Activated T-helper 2 cell treated with anti-CD3 and anti-CD28 coated beads, Interferon-gamma antibody, Interleukin-2, Interleukin-4, amounts not matched to agents 10 μg/mL and 5 μg/mL and 100 μg/mL, durations not matched to agents 14 hours and 24 hours and 36 hours (primary cell): ENCODE measurements at regions of chr1 and their contacts with region 1.

Region 1: GRCh38 chr1:198681831-198682759 is 43.3 kb downstream of the PTPRC start:
- DNase-seq: peak; percentile 84
- H3K4me3 Mint-ChIP-seq: peak overlapping the region; percentile 78
- H3K27ac Mint-ChIP-seq: peak overlapping the region; percentile 96
- H3K4me1 Mint-ChIP-seq: peaks cover 77% of the 10 kb centered on the region
- H3K27me3 Mint-ChIP-seq: no peaks in the 10 kb centered on the region

Region 2: DNA sequence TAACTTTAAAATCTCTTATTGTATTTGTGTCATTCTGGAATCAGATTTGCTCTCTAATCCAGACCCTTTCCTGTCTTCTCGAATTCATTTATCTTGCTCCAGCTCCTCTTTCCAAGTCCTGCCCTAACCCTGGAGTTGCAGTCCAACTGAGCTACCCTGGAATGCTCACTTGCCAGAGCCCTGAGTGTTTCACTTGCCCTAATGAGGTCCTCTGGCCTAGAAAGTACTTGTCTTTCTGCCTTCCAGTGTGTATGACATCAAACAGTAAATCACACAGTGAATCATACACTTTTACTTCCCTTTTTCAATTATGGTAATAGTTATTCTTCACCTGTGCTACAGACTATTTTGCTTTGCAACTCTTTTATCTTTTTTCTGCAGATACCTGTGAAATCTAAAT is 428.4 kb before region 1 on chr1:
- intact Hi-C with region 1: loop called (anchors 5 kb)
- DNase-seq: no peak
- H3K4me3 Mint-ChIP-seq: peak overlapping the region; percentile 55
- H3K27ac Mint-ChIP-seq: peak overlapping the region; percentile 90
- H3K4me1 Mint-ChIP-seq: peaks cover 41% of the 10 kb centered on the region
- H3K27me3 Mint-ChIP-seq: no peaks in the 10 kb centered on the region

Region 3: DNA sequence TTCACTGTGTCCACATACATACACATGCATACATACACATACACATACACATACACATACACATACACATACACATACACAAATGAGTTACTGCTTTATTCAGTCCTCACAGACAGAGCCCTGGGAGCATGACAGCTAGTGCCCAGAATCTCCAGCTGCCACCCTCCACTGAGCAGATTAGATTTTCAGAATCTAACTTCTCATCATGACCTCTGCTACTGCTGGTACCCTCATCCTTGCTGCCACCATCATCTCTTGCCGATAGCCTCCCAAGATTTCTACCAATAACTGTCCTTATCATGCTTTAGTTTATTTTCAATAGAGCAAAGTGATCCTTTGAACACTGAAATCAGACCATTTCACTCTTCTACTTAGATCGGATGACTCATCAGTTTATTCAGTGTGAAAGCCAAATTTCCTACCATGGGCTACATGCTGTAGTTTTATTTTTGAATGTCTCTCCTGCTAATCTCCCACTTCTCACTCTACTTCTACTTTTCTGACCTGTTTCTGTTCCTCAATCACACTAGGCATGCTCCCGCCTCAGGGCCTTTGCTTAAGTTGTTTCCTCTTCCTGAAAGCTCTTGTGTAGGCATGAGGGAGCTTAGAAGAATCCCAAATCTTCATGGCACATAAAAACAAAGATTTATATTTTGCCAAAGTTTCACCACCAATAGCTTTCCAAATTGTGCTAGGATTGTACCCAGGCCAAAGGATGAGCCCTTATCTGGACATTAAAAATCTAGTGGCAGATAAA is 184.6 kb before region 1 on chr1:
- intact Hi-C with region 1: no loop called
- DNase-seq: no peak
- H3K4me3 Mint-ChIP-seq: no peak overlapping the region
- H3K27ac Mint-ChIP-seq: no peak overlapping the region
- H3K4me1 Mint-ChIP-seq: peaks cover 8% of the 10 kb centered on the region
- H3K27me3 Mint-ChIP-seq: no peaks in the 10 kb centered on the region

Region 4: DNA sequence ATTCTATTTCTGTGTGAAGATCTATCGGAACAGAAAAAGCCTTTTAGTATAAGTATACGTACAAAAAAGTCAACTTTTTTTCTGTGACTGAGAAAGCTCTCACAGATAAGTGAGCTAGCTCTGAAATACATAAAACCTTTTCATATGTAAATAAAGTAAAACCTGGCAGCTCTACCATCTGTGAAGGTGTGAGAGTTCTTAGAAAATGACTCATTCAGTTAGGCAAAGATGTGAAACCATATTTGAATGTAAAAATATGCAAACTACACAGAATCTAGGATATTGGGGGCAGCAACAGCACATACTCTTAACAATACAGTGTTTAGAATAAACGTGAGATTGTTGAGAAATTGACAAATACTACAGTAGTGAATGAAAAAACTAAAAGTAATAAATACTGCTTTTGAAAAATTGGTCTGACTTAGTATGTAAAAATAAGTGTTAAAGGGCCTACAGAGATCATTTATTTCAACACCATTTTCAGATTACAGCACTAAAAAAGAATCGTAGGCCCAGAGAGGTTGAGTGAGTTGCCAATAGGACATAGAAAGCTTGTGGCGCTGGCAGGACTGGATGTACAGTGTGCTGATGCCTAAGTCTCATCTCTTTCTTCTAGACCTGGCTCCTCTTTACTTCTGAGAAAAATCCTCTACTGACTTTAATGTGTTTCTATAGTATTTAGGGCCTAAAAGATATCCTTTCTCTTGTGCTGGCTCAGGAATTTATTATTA is 161.4 kb before region 1 on chr1:
- intact Hi-C with region 1: loop called (anchors 1 kb)
- DNase-seq: no peak
- H3K4me3 Mint-ChIP-seq: peak overlapping the region; percentile 73
- H3K27ac Mint-ChIP-seq: peak overlapping the region; percentile 85
- H3K4me1 Mint-ChIP-seq: peaks cover 60% of the 10 kb centered on the region
- H3K27me3 Mint-ChIP-seq: no peaks in the 10 kb centered on the region

Region 5: DNA sequence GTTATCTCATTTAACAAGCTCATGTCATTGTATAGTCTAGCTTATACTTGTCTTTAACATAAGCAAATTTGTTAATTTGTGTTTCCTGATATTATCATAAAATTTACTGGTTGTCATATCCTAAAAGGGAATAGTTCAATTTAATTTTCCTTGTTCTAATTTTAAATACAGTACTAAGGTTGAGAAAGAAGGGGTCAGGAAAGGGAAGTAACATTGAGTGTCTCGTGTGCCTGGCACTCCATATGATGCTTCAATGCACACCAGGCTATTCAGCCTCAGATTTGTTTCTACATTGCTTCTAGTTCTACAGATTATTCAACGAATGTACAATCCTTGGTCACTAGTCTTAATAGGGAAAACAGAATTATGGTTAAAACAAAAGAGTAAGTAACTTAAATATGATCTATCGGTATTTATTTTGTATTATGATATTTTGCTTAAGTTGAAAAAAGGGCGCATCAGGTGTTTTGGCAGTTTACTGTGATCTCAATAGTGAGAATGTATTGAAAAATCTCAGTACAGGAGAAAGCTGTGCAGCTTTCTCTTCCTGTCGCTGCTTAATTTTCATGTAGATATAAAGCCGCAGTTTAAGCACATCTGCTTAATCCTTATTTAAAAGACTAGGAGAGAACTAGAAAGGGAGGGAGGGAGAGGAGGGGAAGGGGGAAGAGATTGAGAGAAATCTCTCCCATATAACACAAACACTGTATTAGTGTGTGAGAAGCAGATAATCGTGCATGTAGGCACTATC is 30.3 kb before region 1 on chr1:
- intact Hi-C with region 1: loop called (anchors 1 kb)
- DNase-seq: no peak
- H3K4me3 Mint-ChIP-seq: peak overlapping the region; percentile 73
- H3K27ac Mint-ChIP-seq: peak overlapping the region; percentile 67
- H3K4me1 Mint-ChIP-seq: peaks cover 70% of the 10 kb centered on the region
- H3K27me3 Mint-ChIP-seq: no peaks in the 10 kb centered on the region

Region 6: DNA sequence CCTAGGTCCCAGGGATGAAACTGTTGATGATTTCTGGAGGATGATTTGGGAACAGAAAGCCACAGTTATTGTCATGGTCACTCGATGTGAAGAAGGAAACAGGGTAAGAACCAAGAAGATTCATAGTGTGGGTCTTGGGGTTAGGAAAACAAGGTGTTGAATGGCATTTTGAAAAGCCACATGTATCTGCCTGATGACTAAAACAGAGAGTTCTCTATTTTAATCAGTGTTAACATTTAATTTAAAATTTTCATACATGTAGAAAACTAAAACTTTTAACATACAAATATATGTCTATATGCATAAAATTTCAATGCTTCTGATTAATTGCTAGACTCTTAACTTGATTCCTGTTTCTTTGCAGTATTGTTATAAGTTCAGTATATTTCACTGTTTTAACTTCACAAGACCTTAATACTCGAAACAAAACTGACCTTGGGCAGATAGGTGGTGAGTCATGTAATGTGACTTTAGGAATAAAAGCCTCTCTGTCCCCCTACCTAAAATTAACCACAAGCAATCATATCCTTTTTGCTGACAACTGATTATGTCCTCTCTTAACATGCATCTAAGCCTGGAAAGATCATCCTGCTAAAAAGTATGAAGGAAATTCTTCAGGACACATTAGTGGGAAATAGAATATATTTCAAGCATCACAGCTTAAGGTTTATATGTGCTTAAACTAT is 52.4 kb after region 1 on chr1:
- intact Hi-C with region 1: loop called (anchors 1 kb)
- DNase-seq: no peak
- H3K4me3 Mint-ChIP-seq: no peak overlapping the region
- H3K27ac Mint-ChIP-seq: peak overlapping the region; percentile 73
- H3K4me1 Mint-ChIP-seq: peaks cover 62% of the 10 kb centered on the region
- H3K27me3 Mint-ChIP-seq: no peaks in the 10 kb centered on the region